Mammary epithelial cell (primary cell): ENCODE measurements at regions of chr2 and their contacts with region 1.

Region 1: GRCh38 chr2:237092920-237093781 is 7.5 kb downstream of the COPS8 start:
- DNase-seq: peak; percentile 48
- H3K4me3 ChIP-seq: no peak overlapping the region
- H3K27ac ChIP-seq: peak overlapping the region; percentile 24
- H3K4me1 ChIP-seq: peaks cover 50% of the 10 kb centered on the region
- H3K27me3 ChIP-seq: no peaks in the 10 kb centered on the region
- CTCF ChIP-seq: peak; percentile 68 to 73

Region 2: GRCh38 chr2:236972491-236973342 is 120.4 kb before region 1 on chr2:
- CTCF ChIA-PET with region 1: no interaction called
- dilution Hi-C with region 1: no loop called
- in situ Hi-C with region 1: no loop called
- intact Hi-C with region 1: no loop called
- DNase-seq: peak; percentile 85
- H3K4me3 ChIP-seq: no peak overlapping the region
- H3K27ac ChIP-seq: no peak overlapping the region
- H3K4me1 ChIP-seq: no peaks in the 10 kb centered on the region
- H3K27me3 ChIP-seq: no peaks in the 10 kb centered on the region
- CTCF ChIP-seq: no peak

Region 3: DNA sequence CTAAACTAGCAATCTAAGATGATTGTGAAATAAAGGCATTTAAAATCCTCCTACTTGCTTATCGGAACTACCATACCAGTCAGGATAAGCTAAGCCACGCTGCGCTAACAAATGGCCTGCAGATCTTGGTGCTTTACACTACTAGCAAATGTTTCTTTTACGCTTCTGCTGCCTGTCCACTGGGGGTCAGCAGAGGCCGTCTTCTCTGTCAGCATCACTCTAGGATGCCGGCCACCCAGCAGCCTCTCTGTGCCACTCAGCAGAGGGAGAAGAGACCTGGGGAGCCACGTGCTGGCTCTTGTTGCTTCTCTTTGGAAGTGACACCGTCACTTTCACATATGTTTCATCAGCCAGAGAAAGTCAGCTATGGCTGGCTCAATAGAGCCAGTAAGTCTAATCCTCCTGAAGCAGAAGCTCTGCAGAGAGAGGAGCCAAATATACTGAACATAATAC is 29.1 kb after region 1 on chr2:
- CTCF ChIA-PET with region 1: no interaction called
- dilution Hi-C with region 1: no loop called
- in situ Hi-C with region 1: no loop called
- intact Hi-C with region 1: loop called (anchors 1 kb)
- DNase-seq: peak; percentile 54
- H3K4me3 ChIP-seq: no peak overlapping the region
- H3K27ac ChIP-seq: no peak overlapping the region
- H3K4me1 ChIP-seq: peaks cover 21% of the 10 kb centered on the region
- H3K27me3 ChIP-seq: no peaks in the 10 kb centered on the region
- CTCF ChIP-seq: peak; percentile 67 to 79

Region 4: DNA sequence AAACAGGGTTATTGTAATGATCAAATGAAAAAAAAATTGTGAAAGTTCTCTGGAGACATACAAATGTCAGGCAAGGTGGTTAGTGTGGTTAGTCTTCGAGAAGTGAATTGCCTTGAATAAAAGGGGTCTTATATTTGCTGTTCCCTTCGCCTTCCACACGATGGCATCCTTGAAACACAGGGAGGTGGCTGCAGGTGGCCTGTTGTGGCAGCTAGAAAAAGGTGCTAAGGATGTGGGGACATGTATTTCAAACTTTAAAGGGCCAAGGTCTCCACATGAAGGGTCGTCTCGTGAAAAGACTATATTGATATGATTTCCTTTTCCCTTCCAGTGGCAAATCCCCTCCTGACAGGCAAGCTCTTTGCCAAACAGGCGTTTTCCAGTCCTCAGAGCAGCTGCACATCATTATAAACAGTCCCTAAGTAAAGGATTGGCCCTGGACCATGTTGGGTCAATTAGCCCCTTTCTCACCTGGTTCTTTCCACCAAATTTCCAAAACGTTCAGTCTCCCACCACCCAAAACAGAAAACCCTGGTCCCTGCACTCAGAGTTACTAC is 61.0 kb after region 1 on chr2:
- CTCF ChIA-PET with region 1: no interaction called
- dilution Hi-C with region 1: no loop called
- in situ Hi-C with region 1: no loop called
- intact Hi-C with region 1: loop called (anchors 5 kb)
- DNase-seq: peak; percentile 37
- H3K4me3 ChIP-seq: no peak overlapping the region
- H3K27ac ChIP-seq: no peak overlapping the region
- H3K4me1 ChIP-seq: peaks cover 9% of the 10 kb centered on the region
- H3K27me3 ChIP-seq: no peaks in the 10 kb centered on the region
- CTCF ChIP-seq: peak; percentile 64 to 67

Region 5: GRCh38 chr2:237322564-237322963 is 229.4 kb after region 1 on chr2:
- CTCF ChIA-PET with region 1: no interaction called
- dilution Hi-C with region 1: no loop called
- in situ Hi-C with region 1: no loop called
- intact Hi-C with region 1: loop called (anchors 2 kb)
- DNase-seq: no peak
- H3K4me3 ChIP-seq: no peak overlapping the region
- H3K27ac ChIP-seq: no peak overlapping the region
- H3K4me1 ChIP-seq: no peaks in the 10 kb centered on the region
- H3K27me3 ChIP-seq: no peaks in the 10 kb centered on the region
- CTCF ChIP-seq: peak; percentile 78

Region 6: DNA sequence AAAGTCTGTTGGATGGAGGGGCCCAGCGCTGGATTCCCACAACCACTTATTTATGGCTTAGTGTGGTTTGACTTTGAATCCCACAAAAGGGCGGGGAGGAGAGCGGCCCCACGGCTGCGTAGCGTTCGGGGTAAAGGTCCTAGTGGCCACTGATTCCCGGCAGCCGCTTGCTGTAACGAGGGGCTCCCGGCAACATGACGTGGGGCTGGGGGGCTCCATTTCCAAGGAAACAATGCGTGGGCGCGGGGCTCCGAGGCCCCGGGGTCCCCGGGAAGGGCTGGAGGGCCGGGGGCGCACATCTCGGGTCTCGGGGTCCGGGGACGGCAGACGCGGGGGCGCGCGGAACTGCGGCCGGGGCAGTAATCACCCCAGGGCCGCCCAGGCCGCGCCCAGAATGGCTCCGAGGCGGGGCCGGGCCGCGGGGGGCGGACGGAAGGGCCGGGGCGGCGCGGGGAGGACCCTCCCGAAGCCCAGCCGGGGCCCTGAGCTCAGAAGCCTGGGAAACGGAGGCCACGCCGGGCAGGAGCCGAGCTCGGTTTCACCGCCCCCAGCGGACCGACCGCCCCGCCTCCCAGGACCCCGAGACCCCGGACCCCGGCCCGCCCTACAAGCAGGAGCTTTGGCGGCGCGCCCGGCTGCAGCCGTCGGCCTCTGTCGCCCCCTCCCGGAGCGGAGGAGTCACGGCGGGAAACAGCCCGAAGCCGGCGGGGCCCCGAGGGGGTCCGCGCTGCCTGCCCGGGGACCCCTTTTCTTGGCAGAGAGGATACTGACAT is 382.0 kb after region 1 on chr2:
- CTCF ChIA-PET with region 1: no interaction called
- dilution Hi-C with region 1: no loop called
- in situ Hi-C with region 1: no loop called
- intact Hi-C with region 1: loop called (anchors 1 kb)
- DNase-seq: peak; percentile 48
- H3K4me3 ChIP-seq: peak overlapping the region; percentile 49 to 64 (median 51)
- H3K27ac ChIP-seq: peak overlapping the region; percentile 70
- H3K4me1 ChIP-seq: peaks cover 20% of the 10 kb centered on the region
- H3K27me3 ChIP-seq: no peaks in the 10 kb centered on the region
- CTCF ChIP-seq: peak; percentile 43 to 96

Region 7: DNA sequence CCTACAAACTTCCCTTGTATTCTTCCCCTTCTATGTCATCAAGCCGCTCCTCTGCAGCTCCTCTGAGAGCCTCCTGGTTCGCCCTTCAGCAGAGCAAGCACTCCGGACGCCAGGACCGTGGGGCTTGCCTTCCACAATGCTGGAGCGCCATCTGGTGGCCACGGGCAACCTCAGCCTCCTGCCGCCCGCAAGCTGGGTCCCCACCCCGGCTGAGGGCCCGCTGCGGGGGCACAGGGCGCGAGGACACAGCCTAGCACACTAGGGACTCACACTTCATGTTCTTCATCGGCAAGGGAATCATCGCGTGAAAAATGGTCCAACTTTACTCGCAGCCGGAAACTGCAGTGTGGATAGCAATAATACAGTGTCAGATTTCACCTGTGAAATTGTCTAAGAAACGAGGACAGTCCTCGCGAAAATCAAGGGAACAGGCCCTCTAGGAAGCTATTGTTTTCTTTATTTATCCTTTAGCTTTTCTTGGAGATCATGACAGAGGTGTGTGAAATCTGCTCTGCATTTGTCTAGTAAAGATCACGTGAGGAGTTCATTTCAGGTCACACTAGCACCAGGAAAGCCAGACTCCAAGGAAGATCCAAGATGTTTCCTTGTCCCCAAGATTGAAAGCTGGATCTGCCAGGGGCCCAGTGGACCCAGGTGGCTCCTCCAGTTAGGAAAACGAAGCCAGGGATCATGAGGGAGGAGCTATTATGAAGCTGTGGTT is 479.0 kb after region 1 on chr2:
- CTCF ChIA-PET with region 1: no interaction called
- dilution Hi-C with region 1: no loop called
- in situ Hi-C with region 1: no loop called
- intact Hi-C with region 1: loop called (anchors 1 kb)
- DNase-seq: peak; percentile 68
- H3K4me3 ChIP-seq: no peak overlapping the region
- H3K27ac ChIP-seq: no peak overlapping the region
- H3K4me1 ChIP-seq: peaks cover 25% of the 10 kb centered on the region
- H3K27me3 ChIP-seq: no peaks in the 10 kb centered on the region
- CTCF ChIP-seq: peak; percentile 76 to 97